ENCODE measurements at regions of chr1 and their contacts with region 1.

Region 1: GRCh38 chr1:160376525-160377131 is 9.8 kb downstream of the NHLH1 start:
- DNase-seq: peak; percentile 55
- H3K4me3 Mint-ChIP-seq: no peak overlapping the region
- H3K27ac Mint-ChIP-seq: no peak overlapping the region
- H3K4me1 Mint-ChIP-seq: peaks cover 17% of the 10 kb centered on the region
- H3K27me3 Mint-ChIP-seq: peaks cover 24% of the 10 kb centered on the region
- CTCF ChIP-seq: peak; percentile 79

Region 2: DNA sequence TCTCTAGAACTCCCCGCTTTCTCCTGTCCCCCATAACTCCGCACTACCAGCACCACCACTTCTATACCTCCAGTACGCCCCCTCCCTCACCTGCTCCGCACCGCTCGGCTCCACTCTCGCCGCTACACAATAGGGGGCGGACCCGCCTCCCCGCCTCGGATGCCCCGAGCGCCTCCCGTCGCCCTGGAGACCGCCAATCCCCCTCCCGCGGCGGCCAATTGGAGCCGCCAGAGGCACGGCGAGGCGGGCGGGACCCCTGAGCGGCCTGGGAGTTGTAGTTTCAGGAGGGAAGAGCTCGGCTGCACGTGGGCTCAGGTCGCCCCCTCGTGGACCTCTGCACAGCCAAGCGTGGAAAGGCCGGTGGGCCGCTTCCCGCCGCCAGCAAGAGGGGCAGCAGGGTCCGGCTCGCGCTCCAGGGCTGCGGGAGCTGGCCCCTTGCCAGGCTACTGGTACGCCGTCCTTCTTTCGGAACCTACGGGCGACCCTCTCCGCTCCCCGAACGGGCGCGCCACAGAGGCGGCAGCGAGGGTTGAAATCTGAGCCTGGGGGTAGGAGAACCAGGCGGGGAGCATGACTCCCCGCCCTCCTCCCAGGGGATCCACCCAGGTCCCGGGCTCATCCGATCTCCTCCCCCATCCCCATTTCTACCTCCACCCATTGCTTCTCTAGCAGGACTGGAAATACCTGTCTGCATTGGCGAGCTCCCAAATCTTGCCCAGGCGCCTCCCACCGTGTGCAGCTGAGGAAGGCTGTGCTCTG is 431.0 kb before region 1 on chr1 and contains the start of gene IGSF9:
- CTCF ChIA-PET with region 1: interaction called, 3 read pairs
- intact Hi-C with region 1: loop called (anchors 10 kb)
- DNase-seq: peak; percentile 94
- H3K4me3 Mint-ChIP-seq: peak within 1 kb of the TSS; percentile 94
- H3K27ac Mint-ChIP-seq: peak within 1 kb of the TSS; percentile 86
- H3K4me1 Mint-ChIP-seq: peaks cover 35% of the 10 kb centered on the region
- H3K27me3 Mint-ChIP-seq: peaks cover 9% of the 10 kb centered on the region
- CTCF ChIP-seq: peak; percentile 48
- total RNA-seq, gene IGSF9: 7.5 and 7.6 TPM in 2 replicates

Region 3: DNA sequence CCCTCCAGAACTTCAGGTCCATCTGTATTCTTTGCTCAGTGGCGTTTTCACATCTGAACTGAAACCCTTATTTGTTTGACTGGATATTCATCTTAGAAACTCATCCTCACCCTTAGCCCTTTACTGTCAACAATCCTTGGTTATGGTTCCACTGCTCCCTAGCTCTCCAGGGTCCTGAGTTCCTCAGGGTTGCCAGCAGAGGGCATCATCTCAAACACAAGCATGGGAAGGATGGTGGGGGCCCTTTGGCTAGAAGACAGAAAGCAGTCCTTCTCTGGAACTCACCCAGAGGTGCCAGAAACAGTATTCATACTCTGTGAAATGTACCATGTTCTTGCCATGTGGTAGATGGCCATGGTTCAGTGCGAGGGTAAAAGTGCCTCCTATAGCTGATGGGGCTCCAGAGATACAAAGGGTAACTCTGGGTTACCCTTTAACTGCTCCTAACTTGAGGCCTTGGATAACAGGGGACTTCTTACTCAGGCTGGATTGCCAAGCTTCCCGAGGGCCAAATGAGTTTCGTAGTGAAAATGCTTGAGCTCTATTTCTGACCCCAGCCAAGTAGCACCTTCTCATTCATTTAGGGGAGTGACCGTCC is 22.1 kb before region 1 on chr1:
- CTCF ChIA-PET with region 1: interaction called, 17 read pairs
- intact Hi-C with region 1: loop called (anchors 1 kb)
- DNase-seq: peak; percentile 53
- H3K4me3 Mint-ChIP-seq: no peak overlapping the region
- H3K27ac Mint-ChIP-seq: no peak overlapping the region
- H3K4me1 Mint-ChIP-seq: no peaks in the 10 kb centered on the region
- H3K27me3 Mint-ChIP-seq: no peaks in the 10 kb centered on the region
- CTCF ChIP-seq: peak; percentile 61

Region 4: DNA sequence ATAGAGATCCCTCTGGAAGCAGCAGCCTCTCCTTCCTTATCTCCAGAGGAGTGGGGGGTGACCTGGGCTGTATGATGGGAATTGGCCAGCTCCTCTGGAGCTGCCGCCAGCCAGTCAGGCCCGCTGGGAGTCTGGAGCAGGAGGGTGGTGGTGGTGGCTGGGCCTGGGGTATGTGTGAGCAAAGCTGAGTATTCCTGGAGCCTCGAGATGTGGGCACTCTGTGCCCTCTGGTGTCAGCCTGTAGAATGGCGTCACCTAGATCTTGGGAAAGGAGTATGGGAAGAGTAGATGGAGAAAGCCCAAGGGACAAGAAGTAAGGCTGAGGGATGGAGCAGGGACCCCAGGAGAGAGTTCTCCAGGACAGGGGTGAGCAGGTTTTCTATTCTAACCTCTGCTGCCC is 39.7 kb after region 1 on chr1:
- CTCF ChIA-PET with region 1: interaction called, 8 read pairs
- intact Hi-C with region 1: loop called (anchors 2 kb)
- DNase-seq: peak; percentile 60
- H3K4me3 Mint-ChIP-seq: no peak overlapping the region
- H3K27ac Mint-ChIP-seq: no peak overlapping the region
- H3K4me1 Mint-ChIP-seq: no peaks in the 10 kb centered on the region
- H3K27me3 Mint-ChIP-seq: peaks cover 72% of the 10 kb centered on the region
- CTCF ChIP-seq: peak; percentile 13

Measured in Calu3 (cell line).